ENCODE measurements at regions of chr20 and their contacts with region 1.

Region 1: GRCh38 chr20:1466211-1467081 is at the start of gene NSFL1C:
- DNase-seq: peak; percentile 95 to 100 (median 98)
- ATAC-seq: peak; percentile 98
- H3K4me3 ChIP-seq: peak within 1 kb of the TSS; percentile 59
- H3K4me3 Mint-ChIP-seq: peak within 1 kb of the TSS; percentile 81 to 90 (median 86)
- H3K27ac ChIP-seq: peak within 1 kb of the TSS; percentile 82
- H3K27ac Mint-ChIP-seq: peak within 1 kb of the TSS; percentile 35 to 90 (median 79)
- H3K4me1 ChIP-seq: peaks cover 19 to 29% of the 10 kb centered on the region in 2 donors
- H3K4me1 Mint-ChIP-seq: peaks cover 42 to 61% (median 48%) of the 10 kb centered on the region in 7 donors
- H3K27me3 ChIP-seq: no peaks in the 10 kb centered on the region
- H3K27me3 Mint-ChIP-seq: peaks cover 0 to 21% (median 6%) of the 10 kb centered on the region in 5 donors
- total RNA-seq, gene NSFL1C: 59.3 to 80.0 (median 64.7) TPM

Region 2: GRCh38 chr20:1118336-1119127 is 347.9 kb before region 1 on chr20 and contains the start of gene PSMF1:
- CTCF ChIA-PET with region 1: interaction called, 3 read pairs
- POLR2A ChIA-PET with region 1: interaction called, 3 read pairs
- intact Hi-C with region 1: loop called (anchors 1 kb)
- DNase-seq: peak; percentile 93 to 99 (median 96)
- ATAC-seq: peak; percentile 98
- H3K4me3 ChIP-seq: peak within 1 kb of the TSS; percentile 98
- H3K4me3 Mint-ChIP-seq: peak within 1 kb of the TSS; percentile 92 to 97 (median 94)
- H3K27ac ChIP-seq: peak within 1 kb of the TSS; percentile 85
- H3K27ac Mint-ChIP-seq: peak within 1 kb of the TSS; percentile 81 to 97 (median 94)
- H3K4me1 ChIP-seq: peaks cover 40 to 45% of the 10 kb centered on the region in 2 donors
- H3K4me1 Mint-ChIP-seq: peaks cover 46 to 68% (median 61%) of the 10 kb centered on the region in 7 donors
- H3K27me3 ChIP-seq: no peaks in the 10 kb centered on the region
- H3K27me3 Mint-ChIP-seq: no peaks in the 10 kb centered on the region
- total RNA-seq, gene PSMF1: 88.7 to 157 (median 114) TPM

Region 3: DNA sequence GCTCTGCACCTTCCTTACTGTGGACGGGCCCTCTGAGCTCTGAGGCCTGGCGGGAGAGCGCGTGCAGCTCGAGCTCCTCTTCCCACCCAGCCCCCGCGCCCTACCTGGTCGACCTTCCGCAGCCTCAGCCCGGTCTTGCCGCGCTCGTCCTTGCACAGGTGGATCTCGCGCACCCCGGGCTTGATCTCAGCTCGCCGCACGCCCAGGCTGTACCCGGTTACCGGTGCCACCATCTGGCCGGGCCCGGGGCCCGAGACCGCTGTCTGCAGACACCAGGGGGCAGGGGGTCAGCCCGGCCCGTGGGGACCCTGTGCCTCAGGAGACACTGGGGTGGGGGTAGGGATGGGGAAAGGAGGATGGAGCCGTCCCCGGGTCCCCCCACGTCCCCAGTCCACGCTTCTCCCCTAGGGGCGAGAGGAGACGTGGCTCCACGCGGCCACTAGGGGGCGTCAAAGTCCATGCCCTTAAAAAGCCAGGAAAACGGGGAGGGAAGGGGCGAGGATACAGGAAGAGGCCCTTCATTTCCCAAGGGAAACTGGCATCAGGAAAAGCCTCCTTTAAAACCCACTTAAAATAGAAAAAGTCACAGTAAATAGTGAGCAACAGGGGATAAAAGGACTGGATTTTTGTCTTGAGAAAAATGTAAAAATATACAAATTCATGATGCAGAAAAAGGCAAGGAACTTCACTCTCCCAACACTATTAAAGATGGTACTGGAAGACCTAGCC is 153.0 kb before region 1 on chr20:
- CTCF ChIA-PET with region 1: interaction called, 3 read pairs
- POLR2A ChIA-PET with region 1: no interaction called
- intact Hi-C with region 1: loop called (anchors 1 kb)
- DNase-seq: peak; percentile 41 to 69 (median 57)
- ATAC-seq: peak; percentile 85
- H3K4me3 ChIP-seq: no peak overlapping the region
- H3K4me3 Mint-ChIP-seq: peak overlapping the region in 2 of 10 donors; percentile 28 to 34
- H3K27ac ChIP-seq: no peak overlapping the region
- H3K27ac Mint-ChIP-seq: peak overlapping the region in 1 of 9 donors; percentile 48
- H3K4me1 ChIP-seq: peaks cover 5 to 7% of the 10 kb centered on the region in 2 donors
- H3K4me1 Mint-ChIP-seq: peaks cover 0 to 16% (median 4%) of the 10 kb centered on the region in 7 donors
- H3K27me3 ChIP-seq: no peaks in the 10 kb centered on the region
- H3K27me3 Mint-ChIP-seq: no peaks in the 10 kb centered on the region

Region 4: GRCh38 chr20:1437235-1437904 is 29.1 kb before region 1 on chr20:
- CTCF ChIA-PET with region 1: interaction called, 3 read pairs
- POLR2A ChIA-PET with region 1: no interaction called
- intact Hi-C with region 1: loop called (anchors 1 kb)
- DNase-seq: peak; percentile 55 to 79 (median 72)
- ATAC-seq: peak; percentile 72
- H3K4me3 ChIP-seq: no peak overlapping the region
- H3K4me3 Mint-ChIP-seq: peak overlapping the region in 1 of 10 donors; percentile 35
- H3K27ac ChIP-seq: no peak overlapping the region
- H3K27ac Mint-ChIP-seq: peak overlapping the region in 3 of 9 donors; percentile 8 to 73 (median 16)
- H3K4me1 ChIP-seq: peaks cover 11 to 17% of the 10 kb centered on the region in 2 donors
- H3K4me1 Mint-ChIP-seq: peaks cover 25 to 53% (median 49%) of the 10 kb centered on the region in 7 donors
- H3K27me3 ChIP-seq: no peaks in the 10 kb centered on the region
- H3K27me3 Mint-ChIP-seq: peaks cover 0 to 19% (median 0%) of the 10 kb centered on the region in 5 donors

Region 5: DNA sequence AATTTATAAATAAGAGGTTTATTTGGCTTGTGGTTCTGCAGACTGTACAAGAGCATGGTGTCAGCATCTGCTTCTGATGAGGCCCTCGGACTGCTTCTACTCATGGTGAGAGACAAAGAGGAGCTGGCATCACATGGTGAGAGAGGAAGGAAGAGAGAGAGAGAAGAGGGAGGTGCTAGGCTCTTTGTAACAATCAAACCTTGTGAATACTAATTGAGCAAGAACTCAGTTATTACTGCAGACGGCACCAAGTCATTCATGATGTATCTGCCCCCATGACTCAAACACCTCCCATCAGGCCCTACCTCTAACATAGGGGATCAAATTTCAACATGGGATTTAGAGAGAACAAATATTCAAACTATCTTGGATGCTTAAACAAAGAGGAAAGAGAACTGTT is 197.5 kb after region 1 on chr20:
- CTCF ChIA-PET with region 1: no interaction called
- POLR2A ChIA-PET with region 1: no interaction called
- intact Hi-C with region 1: loop called (anchors 5 kb)
- DNase-seq: peak in 1 of 9 donors; percentile 29
- ATAC-seq: peak; percentile 53
- H3K4me3 ChIP-seq: peak overlapping the region; percentile 57
- H3K4me3 Mint-ChIP-seq: peak overlapping the region; percentile 69 to 96 (median 84)
- H3K27ac ChIP-seq: peak overlapping the region; percentile 70
- H3K27ac Mint-ChIP-seq: peak overlapping the region; percentile 70 to 98 (median 91)
- H3K4me1 ChIP-seq: peaks cover 83 to 89% of the 10 kb centered on the region in 2 donors
- H3K4me1 Mint-ChIP-seq: peaks cover 80 to 100% (median 92%) of the 10 kb centered on the region in 7 donors
- H3K27me3 ChIP-seq: no peaks in the 10 kb centered on the region
- H3K27me3 Mint-ChIP-seq: no peaks in the 10 kb centered on the region

Region 6: DNA sequence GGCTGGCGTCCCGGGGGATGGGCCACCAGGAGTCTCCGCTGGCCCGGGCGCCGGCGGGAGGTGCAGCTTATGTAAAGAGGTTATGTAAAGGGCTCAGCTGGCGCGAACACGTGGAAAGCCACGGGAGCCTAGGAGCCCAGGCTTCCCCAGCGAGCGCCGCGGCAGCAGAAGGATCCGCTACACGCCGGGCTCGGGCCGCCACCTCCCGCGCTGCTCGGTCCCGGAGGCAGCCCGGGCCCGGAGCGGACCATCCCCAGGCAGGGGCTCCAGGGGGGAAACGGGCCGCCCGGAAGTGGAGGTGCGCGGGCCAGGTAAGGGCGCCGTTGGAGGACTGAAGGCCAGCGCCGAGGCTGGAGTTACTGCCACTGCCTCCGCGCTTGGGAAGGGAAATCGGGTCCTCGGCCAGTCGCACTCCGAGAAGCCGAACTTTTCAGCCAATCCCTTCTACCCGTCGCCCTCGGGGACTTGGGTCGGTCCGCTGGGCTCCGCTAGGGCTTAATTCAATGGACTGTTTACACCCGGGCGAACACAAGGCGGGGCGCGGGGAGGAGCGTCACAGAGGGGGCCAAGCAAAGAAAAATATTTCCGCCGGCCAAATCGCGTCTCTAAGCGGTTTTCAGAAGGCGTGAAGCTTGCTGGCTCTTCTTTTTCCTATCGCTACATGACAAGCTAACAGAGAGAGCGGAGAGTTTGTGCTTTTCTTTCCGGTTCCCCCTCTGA is 635.6 kb after region 1 on chr20:
- CTCF ChIA-PET with region 1: no interaction called
- POLR2A ChIA-PET with region 1: no interaction called
- intact Hi-C with region 1: loop called (anchors 5 kb)
- DNase-seq: peak; percentile 82 to 94 (median 92)
- ATAC-seq: peak; percentile 88
- H3K4me3 ChIP-seq: peak overlapping the region; percentile 88
- H3K4me3 Mint-ChIP-seq: peak overlapping the region; percentile 90 to 97 (median 96)
- H3K27ac ChIP-seq: peak overlapping the region; percentile 96
- H3K27ac Mint-ChIP-seq: peak overlapping the region; percentile 99 to 100 (median 100)
- H3K4me1 ChIP-seq: peaks cover 29 to 38% of the 10 kb centered on the region in 2 donors
- H3K4me1 Mint-ChIP-seq: peaks cover 36 to 58% (median 44%) of the 10 kb centered on the region in 7 donors
- H3K27me3 ChIP-seq: no peaks in the 10 kb centered on the region
- H3K27me3 Mint-ChIP-seq: peaks cover 0 to 4% (median 0%) of the 10 kb centered on the region in 5 donors

Measured in naive thymus-derived CD4-positive, alpha-beta T cell (primary cell).